Cardiac septum (tissue), 1 donor: ENCODE measurements at regions of chr1 and their contacts with region 1.

Region 1: GRCh38 chr1:61453111-61453961 is 271.6 kb downstream of the TM2D1 start:
- DNase-seq: peak; percentile 90

Region 2: DNA sequence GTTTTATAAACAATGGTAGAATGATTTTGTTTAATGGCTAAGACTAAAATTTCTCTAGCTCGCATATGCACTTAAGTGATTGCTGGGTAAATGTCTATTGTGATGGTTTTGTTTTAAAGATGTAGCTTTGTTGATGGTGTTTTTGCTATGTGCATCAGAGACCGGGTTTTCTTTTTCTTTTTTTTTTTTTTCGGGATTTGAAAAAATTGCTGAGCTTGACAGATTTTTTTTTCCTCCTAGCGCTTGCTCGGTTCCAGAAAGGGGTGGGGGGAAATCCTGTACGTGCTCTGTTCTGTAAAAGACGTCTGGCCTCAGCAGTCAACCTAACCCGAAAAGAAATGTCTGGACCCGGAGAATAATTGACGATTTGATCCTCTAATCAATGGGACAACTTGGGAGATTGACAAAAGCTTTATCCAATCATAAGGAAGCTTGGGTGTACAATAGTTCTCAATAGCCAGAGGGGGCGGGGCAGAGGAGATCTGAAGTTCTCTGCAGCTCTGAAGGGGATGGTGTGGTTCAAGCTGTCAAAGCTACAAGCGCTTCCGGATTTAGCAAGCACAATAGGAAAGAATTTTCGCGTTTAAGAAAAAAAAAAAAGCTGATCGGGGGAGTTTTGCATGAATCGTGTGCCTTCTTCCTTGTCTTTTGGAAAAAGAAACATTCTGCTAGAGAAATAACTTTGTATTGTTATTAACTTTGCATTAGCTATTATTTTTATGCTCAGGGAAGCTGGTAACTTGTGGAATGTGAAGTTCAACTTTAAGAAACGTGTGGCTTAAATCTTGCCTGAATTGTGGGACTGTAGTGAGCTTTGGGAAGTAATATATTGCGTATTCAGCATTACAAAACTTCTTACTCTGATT is 375.4 kb before region 1 on chr1:
- intact Hi-C with region 1: loop called (anchors 2 kb)
- DNase-seq: peak; percentile 92

Region 3: GRCh38 chr1:61253059-61253735 is 200.1 kb before region 1 on chr1:
- intact Hi-C with region 1: loop called (anchors 10 kb)
- DNase-seq: no peak

Region 4: GRCh38 chr1:61323681-61324328 is 129.5 kb before region 1 on chr1:
- intact Hi-C with region 1: no loop called
- DNase-seq: no peak

Region 5: GRCh38 chr1:61641578-61642336 is 188.4 kb after region 1 on chr1:
- intact Hi-C with region 1: loop called (anchors 5 kb)
- DNase-seq: peak; percentile 90